ENCODE measurements at regions of chr11 and their contacts with region 1.

Region 1: DNA sequence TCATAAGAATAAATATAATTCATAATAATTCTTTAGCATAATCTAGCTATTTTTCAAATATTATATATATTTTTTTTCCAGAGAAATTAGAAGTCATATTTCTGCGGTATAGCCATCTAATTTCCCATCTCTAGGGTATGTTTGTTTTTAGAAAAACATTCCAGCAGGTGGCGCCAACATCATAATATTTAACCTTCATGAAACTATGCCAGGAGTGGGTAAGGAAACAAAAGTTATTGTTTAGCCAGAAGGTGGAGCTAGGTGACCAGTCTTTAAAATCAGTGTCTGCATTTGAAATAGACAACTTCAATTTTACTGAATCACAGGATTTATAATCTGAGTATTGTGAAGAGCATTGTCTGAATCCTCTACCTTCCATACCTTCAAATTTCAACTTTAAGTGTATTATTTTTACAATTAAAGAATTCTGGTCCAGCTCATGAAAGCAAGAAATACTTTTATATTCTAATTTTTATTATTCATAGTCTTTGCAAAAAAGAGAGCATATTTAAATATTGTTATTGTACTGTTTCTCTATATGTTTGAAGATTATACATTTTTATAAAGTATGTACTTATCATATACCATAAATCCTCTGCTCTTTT is 15.7 kb upstream of the CCDC179 start:
- DNase-seq: no peak
- ATAC-seq: peak; percentile 74
- H3K4me3 Mint-ChIP-seq: no peak overlapping the region
- H3K27ac Mint-ChIP-seq: no peak overlapping the region
- H3K4me1 Mint-ChIP-seq: no peaks in the 10 kb centered on the region
- H3K27me3 Mint-ChIP-seq: peaks cover 4% of the 10 kb centered on the region
- CTCF ChIP-seq: peak; percentile 77

Region 2: DNA sequence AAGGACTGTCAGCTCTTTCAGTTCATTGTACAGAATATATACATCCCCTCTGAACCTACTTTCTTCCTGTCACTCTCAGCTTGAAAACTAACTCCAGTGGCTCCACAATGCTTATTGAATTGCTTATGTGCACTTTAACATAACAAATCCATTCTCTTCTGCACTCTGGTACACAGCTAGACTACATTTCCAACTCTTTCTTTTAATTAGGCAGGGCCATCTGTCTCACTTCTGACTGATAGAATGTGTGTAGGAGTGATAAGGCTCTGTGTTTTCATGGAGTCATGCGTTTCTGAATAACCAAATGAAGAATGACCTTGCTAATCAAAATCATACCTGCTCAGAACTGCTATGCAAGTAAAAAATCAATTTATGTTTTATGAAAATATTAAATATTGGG is 262.8 kb after region 1 on chr11:
- CTCF ChIA-PET with region 1: no interaction called
- POLR2A ChIA-PET with region 1: no interaction called
- intact Hi-C with region 1: no loop called
- DNase-seq: no peak
- ATAC-seq: no peak
- H3K4me3 Mint-ChIP-seq: no peak overlapping the region
- H3K27ac Mint-ChIP-seq: no peak overlapping the region
- H3K4me1 Mint-ChIP-seq: no peaks in the 10 kb centered on the region
- H3K27me3 Mint-ChIP-seq: no peaks in the 10 kb centered on the region
- CTCF ChIP-seq: no peak

Region 3: GRCh38 chr11:23540101-23540561 is 664.2 kb after region 1 on chr11:
- CTCF ChIA-PET with region 1: no interaction called
- POLR2A ChIA-PET with region 1: no interaction called
- intact Hi-C with region 1: loop called (anchors 5 kb)
- DNase-seq: no peak
- ATAC-seq: peak; percentile 57
- H3K4me3 Mint-ChIP-seq: no peak overlapping the region
- H3K27ac Mint-ChIP-seq: no peak overlapping the region
- H3K4me1 Mint-ChIP-seq: peaks cover 4% of the 10 kb centered on the region
- H3K27me3 Mint-ChIP-seq: no peaks in the 10 kb centered on the region
- CTCF ChIP-seq: no peak